Endothelial cell of umbilical vein (primary cell): ENCODE measurements at regions of chr11 and their contacts with region 1.

Region 1: DNA sequence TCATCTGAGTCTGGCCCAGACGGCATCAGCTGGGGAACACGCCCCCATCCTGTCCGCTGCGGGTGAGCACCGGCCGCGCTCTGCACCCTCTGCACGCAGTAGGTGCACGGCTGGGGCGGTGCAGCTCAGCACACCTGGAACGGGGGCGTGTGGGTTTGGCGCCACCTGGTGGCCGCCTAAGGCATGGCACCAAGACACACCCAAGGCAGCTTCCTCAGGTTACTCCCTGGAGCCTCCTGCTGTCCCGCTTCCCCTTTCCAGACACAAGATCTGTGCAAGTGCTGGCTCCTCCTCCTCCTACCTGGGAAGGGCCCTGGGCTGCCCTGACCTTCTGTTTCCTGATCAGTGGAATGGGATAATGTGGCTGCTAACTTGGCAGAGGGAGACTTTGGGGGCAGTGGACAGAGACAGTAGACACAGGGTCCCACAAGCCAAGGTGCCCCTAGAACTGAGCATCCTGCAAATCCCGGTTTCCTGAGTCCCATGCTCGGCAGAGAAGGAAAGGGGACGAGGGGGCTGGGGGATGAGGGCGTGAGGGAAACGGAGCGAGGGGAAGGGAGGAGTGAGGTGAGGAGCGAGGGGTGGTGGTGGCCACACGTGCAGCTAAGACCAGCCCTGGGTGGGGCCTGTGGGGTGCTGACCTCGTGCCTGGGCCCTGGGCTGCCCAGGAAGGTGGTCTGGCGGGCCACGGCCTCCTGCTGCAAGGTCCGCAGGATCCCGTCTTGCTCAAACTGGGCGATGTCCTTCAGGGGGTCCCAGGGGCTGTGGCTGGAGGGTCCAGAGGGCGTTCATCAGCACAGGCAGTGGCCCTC is 34.8 kb upstream of the CARS1 start:
- DNase-seq: peak; percentile 59
- H3K4me3 ChIP-seq: no peak overlapping the region
- H3K27ac ChIP-seq: no peak overlapping the region
- H3K4me1 ChIP-seq: peaks cover 21% of the 10 kb centered on the region
- H3K27me3 ChIP-seq: no peaks in the 10 kb centered on the region
- CTCF ChIP-seq: peak; percentile 98 to 99
- POLR2A ChIP-seq: no peak

Region 2: GRCh38 chr11:2930704-2931428 is 161.1 kb before region 1 on chr11:
- CTCF ChIA-PET with region 1: interaction called, 6 read pairs
- POLR2A ChIA-PET with region 1: no interaction called
- dilution Hi-C with region 1: no loop called
- intact Hi-C with region 1: loop called (anchors 2 kb)
- DNase-seq: peak; percentile 68
- H3K4me3 ChIP-seq: peak overlapping the region in 2 of 3 experiments; percentile 21 to 37
- H3K27ac ChIP-seq: peak overlapping the region; percentile 78
- H3K4me1 ChIP-seq: peaks cover 26% of the 10 kb centered on the region
- H3K27me3 ChIP-seq: no peaks in the 10 kb centered on the region
- CTCF ChIP-seq: peak; percentile 39 to 82
- POLR2A ChIP-seq: no peak

Region 3: DNA sequence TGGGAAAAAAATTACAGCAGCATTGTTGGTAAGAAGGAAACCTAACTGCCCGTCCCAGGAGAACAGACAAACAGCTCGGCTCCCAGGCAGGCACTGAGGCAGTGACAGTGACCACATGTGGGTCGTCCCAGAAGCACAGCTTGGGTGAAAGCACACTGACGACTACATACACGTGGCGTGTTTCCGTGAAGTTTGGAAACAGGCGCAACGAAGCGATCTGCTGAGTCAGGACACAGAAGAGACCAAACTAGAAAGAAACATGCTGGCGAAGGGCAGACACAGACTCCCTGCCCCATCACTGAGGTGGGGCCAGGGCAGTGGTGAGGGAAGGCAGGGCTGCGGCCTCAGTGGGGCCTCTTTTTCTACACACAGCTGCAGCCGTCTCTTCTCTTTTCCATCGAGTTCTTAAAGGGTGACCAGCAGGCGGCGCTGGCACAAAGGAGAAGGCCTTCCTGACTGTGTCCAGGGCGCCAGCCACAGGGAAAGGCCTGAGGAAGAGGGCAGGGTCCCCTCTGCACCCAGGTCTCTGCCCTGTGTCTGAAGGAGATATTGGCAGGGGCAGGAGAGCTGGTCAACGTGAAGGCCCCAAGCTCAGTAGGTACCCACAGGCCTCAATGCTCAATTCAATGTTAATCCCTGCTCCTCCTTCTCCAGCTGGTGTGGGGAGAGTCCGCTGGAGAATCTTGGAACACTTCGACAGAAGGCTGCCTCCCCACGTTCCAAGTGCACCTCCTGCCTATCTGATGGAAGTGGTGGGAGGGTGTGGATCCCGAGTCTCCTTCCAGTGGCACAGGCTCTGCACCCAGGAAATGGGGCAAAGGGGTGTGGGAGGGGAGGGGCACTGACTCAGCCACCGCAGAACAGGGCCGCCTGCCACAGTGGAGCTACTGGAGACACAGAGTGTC is 54.7 kb before region 1 on chr11:
- CTCF ChIA-PET with region 1: interaction called, 183 read pairs
- POLR2A ChIA-PET with region 1: no interaction called
- dilution Hi-C with region 1: no loop called
- intact Hi-C with region 1: loop called (anchors 1 kb)
- DNase-seq: peak; percentile 54
- H3K4me3 ChIP-seq: no peak overlapping the region
- H3K27ac ChIP-seq: no peak overlapping the region
- H3K4me1 ChIP-seq: no peaks in the 10 kb centered on the region
- H3K27me3 ChIP-seq: no peaks in the 10 kb centered on the region
- CTCF ChIP-seq: peak; percentile 65 to 84
- POLR2A ChIP-seq: no peak

Region 4: GRCh38 chr11:3057069-3057963 is 34.7 kb before region 1 on chr11 and contains the start of gene CARS1:
- CTCF ChIA-PET with region 1: interaction called, 29 read pairs
- POLR2A ChIA-PET with region 1: no interaction called
- dilution Hi-C with region 1: no loop called
- intact Hi-C with region 1: loop called (anchors 1 kb)
- DNase-seq: peak; percentile 89
- H3K4me3 ChIP-seq: peak within 1 kb of the TSS; percentile 70 to 84 (median 83)
- H3K27ac ChIP-seq: peak within 1 kb of the TSS; percentile 68
- H3K4me1 ChIP-seq: peaks cover 9% of the 10 kb centered on the region
- H3K27me3 ChIP-seq: peaks cover 0 to 1% of the 10 kb centered on the region in 2 experiments
- CTCF ChIP-seq: no peak
- POLR2A ChIP-seq: peak; percentile 70
- total RNA-seq, gene CARS1: 66.2 and 72.3 TPM in 2 replicates

Region 5: GRCh38 chr11:3101921-3102640 is 10.1 kb after region 1 on chr11:
- CTCF ChIA-PET with region 1: interaction called, 10 read pairs
- POLR2A ChIA-PET with region 1: no interaction called
- dilution Hi-C with region 1: no loop called
- intact Hi-C with region 1: no loop called
- DNase-seq: no peak
- H3K4me3 ChIP-seq: no peak overlapping the region
- H3K27ac ChIP-seq: no peak overlapping the region
- H3K4me1 ChIP-seq: peaks cover 4% of the 10 kb centered on the region
- H3K27me3 ChIP-seq: no peaks in the 10 kb centered on the region
- CTCF ChIP-seq: no peak
- POLR2A ChIP-seq: no peak

Region 6: DNA sequence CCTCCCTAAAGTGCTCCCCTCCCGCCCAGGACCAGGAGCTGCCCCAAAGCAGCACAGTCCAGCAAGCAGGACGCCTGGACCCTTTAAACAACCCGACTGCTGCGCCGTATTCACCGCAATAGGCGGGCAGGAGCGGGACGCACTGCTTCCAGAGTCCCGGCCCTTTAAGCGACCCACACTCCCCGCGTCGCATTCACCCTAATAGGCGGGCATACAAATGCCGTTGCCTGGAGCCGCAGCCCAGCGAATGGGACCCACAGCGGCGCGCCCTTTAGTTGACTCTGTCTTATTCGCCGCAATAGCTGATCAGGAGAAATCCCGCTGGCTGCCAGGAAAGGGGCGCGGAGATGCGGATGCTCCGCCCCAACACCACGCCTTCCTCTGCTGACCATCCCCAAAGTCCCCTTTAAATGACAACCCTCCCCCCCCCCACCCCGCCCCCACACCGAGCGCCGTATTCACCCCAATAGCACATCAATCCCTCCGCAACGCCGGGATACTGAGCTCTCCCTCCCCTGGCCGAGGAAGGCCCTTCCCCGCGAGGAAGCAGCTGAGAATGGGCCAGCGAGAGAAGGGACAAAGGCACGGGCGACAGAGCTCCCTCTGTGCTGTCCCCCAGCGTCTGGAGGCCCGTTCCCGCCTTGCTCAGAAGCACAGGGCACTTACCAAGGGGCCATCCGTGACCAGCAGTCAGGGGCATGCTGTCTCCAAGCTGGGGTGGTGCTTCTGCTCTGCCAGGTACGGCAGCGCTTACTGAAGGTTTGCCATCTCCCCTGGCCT is 68.4 kb after region 1 on chr11:
- CTCF ChIA-PET with region 1: interaction called, 7 read pairs
- POLR2A ChIA-PET with region 1: no interaction called
- dilution Hi-C with region 1: no loop called
- intact Hi-C with region 1: loop called (anchors 1 kb)
- DNase-seq: peak; percentile 92
- H3K4me3 ChIP-seq: peak overlapping the region; percentile 9 to 54 (median 29)
- H3K27ac ChIP-seq: no peak overlapping the region
- H3K4me1 ChIP-seq: peaks cover 5% of the 10 kb centered on the region
- H3K27me3 ChIP-seq: no peaks in the 10 kb centered on the region
- CTCF ChIP-seq: no peak
- POLR2A ChIP-seq: no peak

Region 7: GRCh38 chr11:3189196-3189843 is 97.3 kb after region 1 on chr11:
- CTCF ChIA-PET with region 1: no interaction called
- POLR2A ChIA-PET with region 1: no interaction called
- dilution Hi-C with region 1: no loop called
- intact Hi-C with region 1: no loop called
- DNase-seq: no peak
- H3K4me3 ChIP-seq: no peak overlapping the region
- H3K27ac ChIP-seq: no peak overlapping the region
- H3K4me1 ChIP-seq: no peaks in the 10 kb centered on the region
- H3K27me3 ChIP-seq: peaks cover 0 to 4% of the 10 kb centered on the region in 2 experiments
- CTCF ChIP-seq: no peak
- POLR2A ChIP-seq: no peak